T-cell (primary cell): ENCODE measurements at regions of chr2 and their contacts with region 1.

Region 1: GRCh38 chr2:235698028-235698427 is 204.2 kb downstream of the AGAP1 start:
- DNase-seq: no peak
- ATAC-seq: no peak
- H3K4me3 ChIP-seq: no peak overlapping the region
- H3K4me3 Mint-ChIP-seq: no peak overlapping the region
- H3K27ac ChIP-seq: no peak overlapping the region
- H3K27ac Mint-ChIP-seq: no peak overlapping the region
- H3K4me1 ChIP-seq: peaks cover 0 to 4% of the 10 kb centered on the region in 2 experiments
- H3K4me1 Mint-ChIP-seq: no peaks in the 10 kb centered on the region
- H3K27me3 ChIP-seq: peaks cover 0 to 10% of the 10 kb centered on the region in 2 experiments
- H3K27me3 Mint-ChIP-seq: peaks cover 3 to 4% of the 10 kb centered on the region in 2 donors

Region 2: GRCh38 chr2:235709124-235709813 is 11.2 kb after region 1 on chr2:
- CTCF ChIA-PET with region 1: no interaction called
- POLR2A ChIA-PET with region 1: interaction called in 1 of 2 experiments, 10 read pairs
- DNase-seq: no peak
- ATAC-seq: no peak
- H3K4me3 ChIP-seq: no peak overlapping the region
- H3K4me3 Mint-ChIP-seq: no peak overlapping the region
- H3K27ac ChIP-seq: no peak overlapping the region
- H3K27ac Mint-ChIP-seq: no peak overlapping the region
- H3K4me1 ChIP-seq: peaks cover 0 to 19% of the 10 kb centered on the region in 2 experiments
- H3K4me1 Mint-ChIP-seq: no peaks in the 10 kb centered on the region
- H3K27me3 ChIP-seq: peaks cover 0 to 3% of the 10 kb centered on the region in 2 experiments
- H3K27me3 Mint-ChIP-seq: peaks cover 3 to 8% of the 10 kb centered on the region in 2 donors

Region 3: GRCh38 chr2:237045432-237045831 is 1347.4 kb after region 1 on chr2:
- CTCF ChIA-PET with region 1: no interaction called
- POLR2A ChIA-PET with region 1: no interaction called
- DNase-seq: no peak
- ATAC-seq: no peak
- H3K4me3 ChIP-seq: no peak overlapping the region
- H3K4me3 Mint-ChIP-seq: no peak overlapping the region
- H3K27ac ChIP-seq: no peak overlapping the region
- H3K27ac Mint-ChIP-seq: no peak overlapping the region
- H3K4me1 ChIP-seq: no peaks in the 10 kb centered on the region
- H3K4me1 Mint-ChIP-seq: no peaks in the 10 kb centered on the region
- H3K27me3 ChIP-seq: peaks cover 0 to 3% of the 10 kb centered on the region in 2 experiments
- H3K27me3 Mint-ChIP-seq: peaks cover 15 to 19% of the 10 kb centered on the region in 2 donors